Heart right ventricle (tissue), 16 donors: ENCODE measurements at regions of chr5 and their contacts with region 1.

Region 1: DNA sequence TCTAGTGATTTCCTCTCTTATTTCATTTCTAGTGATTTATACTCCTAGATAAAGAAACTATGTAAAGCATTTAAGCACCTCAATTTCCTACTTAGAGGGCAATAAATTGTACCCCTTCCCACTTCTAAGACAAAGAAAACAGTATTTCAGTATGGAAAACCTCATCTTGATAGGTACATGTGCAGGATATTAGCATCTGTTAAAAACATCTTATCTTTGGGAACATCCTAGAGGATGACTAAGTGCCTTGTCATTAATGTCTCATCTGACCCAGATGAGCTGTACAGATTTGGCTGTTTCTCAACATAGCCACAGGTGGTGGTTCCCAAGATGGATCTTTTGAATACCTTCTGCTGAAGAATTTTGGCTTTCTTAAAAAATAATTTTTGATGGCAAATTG is 5.7 kb downstream of the MEGF10 start:
- DNase-seq: no peak
- ATAC-seq: no peak
- H3K4me3 ChIP-seq: no peak overlapping the region
- H3K27ac ChIP-seq: no peak overlapping the region
- H3K4me1 ChIP-seq: no peaks in the 10 kb centered on the region
- H3K27me3 ChIP-seq: peaks cover 0 to 49% (median 33%) of the 10 kb centered on the region in 7 donors
- CTCF ChIP-seq: no peak

Region 2: DNA sequence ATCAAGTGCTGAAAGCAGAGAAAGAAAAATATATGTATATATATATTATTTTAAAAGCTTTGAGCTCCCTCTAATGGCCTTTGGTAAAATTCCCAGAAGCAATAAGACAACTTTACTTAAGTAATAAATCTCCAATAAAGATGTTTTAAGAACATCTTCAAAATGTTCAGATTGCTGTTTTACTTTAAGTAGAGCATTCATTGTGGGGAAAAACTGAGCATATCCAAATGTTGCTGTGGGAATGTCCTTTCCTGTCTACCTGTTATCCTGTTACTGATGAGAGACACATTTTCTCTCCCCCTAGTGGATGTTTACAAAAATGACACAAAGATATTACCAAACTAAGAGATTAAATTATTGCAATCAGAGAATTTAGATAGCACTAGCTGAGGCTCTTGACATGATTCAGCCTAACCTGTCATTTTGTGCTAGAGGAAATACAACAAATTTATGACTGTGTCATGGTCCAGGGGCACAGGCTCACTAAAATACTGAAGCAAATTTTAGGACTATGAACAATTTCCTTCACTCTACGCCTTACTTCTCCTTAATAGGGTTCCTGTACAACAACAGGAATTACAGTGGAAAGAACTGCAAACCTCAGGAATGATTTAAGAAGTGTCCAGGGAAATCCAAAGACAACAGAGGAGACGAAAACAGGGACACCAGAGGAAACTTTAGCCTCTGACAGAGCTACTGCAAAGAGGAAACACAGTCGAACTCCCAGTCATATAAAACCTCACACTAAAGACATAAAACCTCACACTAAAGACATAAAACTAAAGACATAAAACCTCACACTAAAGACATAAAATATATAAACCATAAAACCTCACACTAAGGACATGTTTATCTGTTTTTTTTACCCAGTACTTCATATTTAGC is 196.8 kb after region 1 on chr5:
- intact Hi-C with region 1: loop called in 6 of 10 experiments (anchors 2 to 10 kb)
- DNase-seq: no peak
- ATAC-seq: peak in 1 of 8 donors; percentile 35
- H3K4me3 ChIP-seq: no peak overlapping the region
- H3K27ac ChIP-seq: no peak overlapping the region
- H3K4me1 ChIP-seq: no peaks in the 10 kb centered on the region
- H3K27me3 ChIP-seq: peaks cover 0 to 41% (median 9%) of the 10 kb centered on the region in 7 donors
- CTCF ChIP-seq: peak; percentile 39 to 79 (median 70)